ENCODE measurements at regions of chr3 and their contacts with region 1.

Region 1: GRCh38 chr3:61605589-61606175 is 44.3 kb downstream of the PTPRG start:
- DNase-seq: no peak
- ATAC-seq: no peak
- H3K4me3 Mint-ChIP-seq: no peak overlapping the region
- H3K27ac Mint-ChIP-seq: no peak overlapping the region
- H3K4me1 Mint-ChIP-seq: peaks cover 33% of the 10 kb centered on the region
- H3K27me3 Mint-ChIP-seq: no peaks in the 10 kb centered on the region
- CTCF ChIP-seq: no peak

Region 2: GRCh38 chr3:61637088-61638051 is 31.7 kb after region 1 on chr3:
- CTCF ChIA-PET with region 1: no interaction called
- POLR2A ChIA-PET with region 1: no interaction called
- DNase-seq: no peak
- ATAC-seq: no peak
- H3K4me3 Mint-ChIP-seq: no peak overlapping the region
- H3K27ac Mint-ChIP-seq: peak overlapping the region; percentile 82
- H3K4me1 Mint-ChIP-seq: peaks cover 68% of the 10 kb centered on the region
- H3K27me3 Mint-ChIP-seq: no peaks in the 10 kb centered on the region
- CTCF ChIP-seq: no peak

Region 3: DNA sequence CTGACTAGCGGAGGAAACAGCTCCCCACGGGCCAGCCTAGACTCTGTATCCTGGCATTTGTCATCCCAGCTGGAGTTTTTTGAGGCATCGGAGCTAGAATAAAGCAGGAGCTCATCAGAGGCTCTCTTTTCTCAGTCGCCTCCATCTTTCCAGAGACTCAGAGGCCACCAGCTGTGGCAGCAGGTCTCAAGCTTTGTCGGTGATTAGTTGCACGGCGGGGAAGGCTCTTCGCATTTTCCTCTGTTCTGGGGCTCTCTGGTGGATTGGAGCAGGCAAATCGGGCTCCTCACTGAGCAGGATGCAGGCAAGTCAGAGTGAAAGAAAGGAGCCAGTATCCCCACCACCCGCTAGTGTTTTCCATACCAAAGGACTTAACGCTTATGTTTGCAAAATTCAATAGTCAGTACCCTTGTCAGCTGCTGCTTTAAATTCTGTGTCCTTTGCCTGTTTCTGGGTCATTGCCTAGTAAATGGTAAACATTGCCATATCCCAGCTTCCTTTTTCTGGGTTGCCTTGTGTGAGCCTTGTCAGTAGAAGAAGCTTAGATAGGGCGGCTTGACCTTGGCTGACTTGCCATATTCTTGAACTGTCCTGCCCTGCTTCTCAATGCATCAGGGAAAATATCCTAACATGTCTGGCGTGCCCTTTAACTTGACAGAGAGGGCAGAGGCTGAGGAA is 82.8 kb after region 1 on chr3:
- CTCF ChIA-PET with region 1: no interaction called
- POLR2A ChIA-PET with region 1: interaction called, 11 read pairs
- DNase-seq: peak; percentile 84
- ATAC-seq: peak; percentile 92
- H3K4me3 Mint-ChIP-seq: peak overlapping the region; percentile 48
- H3K27ac Mint-ChIP-seq: peak overlapping the region; percentile 94
- H3K4me1 Mint-ChIP-seq: peaks cover 97% of the 10 kb centered on the region
- H3K27me3 Mint-ChIP-seq: no peaks in the 10 kb centered on the region
- CTCF ChIP-seq: no peak

Measured in WTC11 (cell line).